Lower leg skin (tissue), 4 donors: ENCODE measurements at regions of chr6 and their contacts with region 1.

Region 1: DNA sequence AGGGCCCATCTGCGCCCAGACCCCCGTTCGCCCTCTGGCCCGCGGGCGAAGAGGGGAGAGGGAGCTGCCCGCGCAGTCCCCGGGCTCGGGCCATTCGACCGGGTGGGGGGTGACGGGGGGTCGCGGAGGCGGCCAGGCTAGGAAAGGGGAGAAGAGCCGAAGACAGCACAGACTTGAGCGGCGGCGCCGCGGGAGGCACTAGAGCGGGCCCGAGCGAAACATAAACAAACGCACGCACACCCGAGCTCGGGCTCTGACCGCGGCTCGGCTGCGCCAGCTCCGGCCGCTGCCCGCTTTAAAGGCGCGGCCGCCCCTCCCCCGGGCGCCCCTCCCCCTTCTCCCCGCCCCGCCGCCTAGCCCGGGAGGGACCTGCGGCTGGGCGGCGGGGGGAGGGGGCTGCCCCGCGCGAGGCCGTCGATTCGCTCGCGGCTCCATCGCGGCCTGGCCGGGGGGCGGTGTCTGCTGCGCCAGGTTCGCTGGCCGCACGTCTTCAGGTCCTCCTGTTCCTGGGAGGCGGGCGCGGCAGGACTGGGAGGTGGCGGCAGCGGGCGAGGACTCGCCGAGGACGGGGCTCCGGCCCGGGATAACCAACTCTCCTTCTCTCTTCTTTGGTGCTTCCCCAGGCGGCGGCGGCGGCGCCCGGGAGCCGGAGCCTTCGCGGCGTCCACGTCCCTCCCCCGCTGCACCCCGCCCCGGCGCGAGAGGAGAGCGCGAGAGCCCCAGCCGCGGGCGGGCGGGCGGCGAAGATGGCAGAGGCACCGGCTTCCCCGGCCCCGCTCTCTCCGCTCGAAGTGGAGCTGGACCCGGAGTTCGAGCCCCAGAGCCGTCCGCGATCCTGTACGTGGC is at the start of gene FOXO3:
- DNase-seq: peak; percentile 88 to 98
- H3K4me3 ChIP-seq: peak within 1 kb of the TSS; percentile 70
- CTCF ChIP-seq: no peak
- POLR2A ChIP-seq: peak in 1 of 2 donors; percentile 85
- total RNA-seq, gene FOXO3: 110 to 176 (median 139) TPM

Region 2: GRCh38 chr6:108589287-108589791 is 28.7 kb after region 1 on chr6:
- intact Hi-C with region 1: loop called (anchors 2 kb)
- DNase-seq: peak; percentile 91 to 94
- H3K4me3 ChIP-seq: no peak overlapping the region
- CTCF ChIP-seq: no peak
- POLR2A ChIP-seq: no peak